Activated naive CD4-positive, alpha-beta T cell treated with anti-CD3 and anti-CD28 coated beads, Interleukin-2, amount 10 ng/mL, durations not matched to agents 7 days and 5 days (primary cell): ENCODE measurements at regions of chr17 and their contacts with region 1.

Region 1: DNA sequence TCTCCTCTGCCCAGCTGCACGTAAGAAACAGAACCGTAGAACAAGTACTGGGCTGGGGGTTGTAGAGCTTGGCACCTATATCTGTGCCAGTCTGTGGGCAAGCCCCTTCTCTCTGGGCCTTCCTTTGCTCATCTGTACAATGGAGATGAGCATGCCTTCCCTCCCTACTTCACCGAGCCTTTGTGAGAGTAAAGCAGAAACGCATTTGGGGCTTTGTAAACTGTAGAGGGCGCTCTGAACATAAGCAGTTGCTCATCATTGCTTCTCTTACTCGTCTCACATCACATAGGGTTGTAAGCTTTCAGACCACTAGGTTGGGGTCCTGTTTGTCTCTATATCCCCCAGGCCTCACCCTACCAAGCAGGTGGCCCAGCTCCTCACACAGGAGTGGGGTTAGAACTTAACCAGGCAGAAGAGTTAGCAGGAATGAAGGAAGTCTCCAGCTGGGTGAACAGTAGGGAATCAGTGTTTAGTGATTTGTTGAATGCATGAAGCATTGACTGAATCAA is 15.1 kb downstream of the SAMD14 start:
- DNase-seq: peak; percentile 68
- H3K4me3 Mint-ChIP-seq: no peak overlapping the region
- H3K27ac Mint-ChIP-seq: no peak overlapping the region
- H3K4me1 Mint-ChIP-seq: peaks cover 11% of the 10 kb centered on the region
- H3K27me3 Mint-ChIP-seq: peaks cover 69% of the 10 kb centered on the region

Region 2: GRCh38 chr17:50022463-50023130 is 92.3 kb before region 1 on chr17:
- CTCF ChIA-PET with region 1: no interaction called
- DNase-seq: no peak
- H3K4me3 Mint-ChIP-seq: no peak overlapping the region
- H3K27ac Mint-ChIP-seq: no peak overlapping the region
- H3K4me1 Mint-ChIP-seq: peaks cover 8% of the 10 kb centered on the region
- H3K27me3 Mint-ChIP-seq: peaks cover 35% of the 10 kb centered on the region

Region 3: GRCh38 chr17:50094753-50095619 is 19.9 kb before region 1 on chr17 and contains the start of gene PDK2:
- CTCF ChIA-PET with region 1: interaction called, 11 read pairs
- DNase-seq: peak; percentile 97
- H3K4me3 Mint-ChIP-seq: peak within 1 kb of the TSS; percentile 97
- H3K27ac Mint-ChIP-seq: peak within 1 kb of the TSS; percentile 94
- H3K4me1 Mint-ChIP-seq: peaks cover 34% of the 10 kb centered on the region
- H3K27me3 Mint-ChIP-seq: peaks cover 5% of the 10 kb centered on the region

Region 4: DNA sequence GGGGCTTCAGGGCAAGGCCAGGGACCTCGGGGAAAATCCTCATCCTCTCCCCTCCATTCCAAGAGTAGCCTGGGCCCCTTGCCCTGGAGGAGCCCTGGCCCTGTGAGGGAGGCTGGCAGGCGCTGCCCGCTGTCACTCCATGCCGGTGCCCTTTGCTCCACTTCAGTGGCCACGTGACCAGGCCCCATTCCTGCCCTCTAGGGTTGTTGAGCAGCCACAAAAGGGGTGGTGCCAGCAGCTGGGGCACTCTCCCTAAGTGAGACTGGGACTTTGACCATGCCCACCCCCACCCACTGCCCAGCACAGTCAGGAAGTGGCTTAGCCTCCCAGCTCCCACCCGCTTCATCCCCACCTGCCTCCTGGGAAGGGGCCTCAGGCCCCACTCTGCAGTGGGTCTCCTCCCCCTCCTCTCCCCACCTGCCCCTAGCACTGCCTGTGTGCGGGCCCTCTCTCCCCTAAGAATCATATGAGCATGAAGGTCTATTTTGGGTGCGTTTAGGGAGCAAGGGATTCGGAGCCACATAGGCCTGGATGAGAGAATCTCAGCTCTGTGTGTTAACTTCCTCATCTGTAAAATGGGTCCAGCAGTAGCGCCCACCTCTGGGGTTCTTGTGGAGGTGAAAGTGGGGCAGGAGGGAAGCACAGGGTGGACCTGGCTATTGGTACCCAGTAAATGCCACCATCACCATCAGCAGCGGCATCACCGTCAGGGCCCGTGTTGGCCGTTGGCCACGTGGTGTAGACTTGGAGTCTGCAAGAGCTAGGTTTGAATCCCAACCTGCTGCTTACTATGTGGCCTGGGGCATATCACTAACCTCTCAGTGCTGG is 12.5 kb before region 1 on chr17:
- CTCF ChIA-PET with region 1: interaction called, 10 read pairs
- DNase-seq: no peak
- H3K4me3 Mint-ChIP-seq: no peak overlapping the region
- H3K27ac Mint-ChIP-seq: no peak overlapping the region
- H3K4me1 Mint-ChIP-seq: peaks cover under 1% of the 10 kb centered on the region
- H3K27me3 Mint-ChIP-seq: no peaks in the 10 kb centered on the region

Region 5: GRCh38 chr17:50161023-50161910 is 46.4 kb after region 1 on chr17:
- CTCF ChIA-PET with region 1: interaction called, 22 read pairs
- DNase-seq: peak; percentile 95
- H3K4me3 Mint-ChIP-seq: peak overlapping the region; percentile 67
- H3K27ac Mint-ChIP-seq: peak overlapping the region; percentile 83
- H3K4me1 Mint-ChIP-seq: peaks cover 48% of the 10 kb centered on the region
- H3K27me3 Mint-ChIP-seq: peaks cover 24% of the 10 kb centered on the region

Region 6: GRCh38 chr17:50169121-50169764 is 54.3 kb after region 1 on chr17:
- CTCF ChIA-PET with region 1: interaction called, 14 read pairs
- DNase-seq: peak; percentile 68
- H3K4me3 Mint-ChIP-seq: peak overlapping the region; percentile 17
- H3K27ac Mint-ChIP-seq: peak overlapping the region; percentile 6
- H3K4me1 Mint-ChIP-seq: peaks cover 16% of the 10 kb centered on the region
- H3K27me3 Mint-ChIP-seq: peaks cover 49% of the 10 kb centered on the region

Region 7: GRCh38 chr17:50177983-50178834 is 63.3 kb after region 1 on chr17:
- CTCF ChIA-PET with region 1: interaction called, 26 read pairs
- DNase-seq: peak; percentile 63
- H3K4me3 Mint-ChIP-seq: no peak overlapping the region
- H3K27ac Mint-ChIP-seq: no peak overlapping the region
- H3K4me1 Mint-ChIP-seq: peaks cover 20% of the 10 kb centered on the region
- H3K27me3 Mint-ChIP-seq: peaks cover 64% of the 10 kb centered on the region